ENCODE measurements at regions of chr19 and their contacts with region 1.

Region 1: GRCh38 chr19:39328046-39328705 is 7.5 kb upstream of the LRFN1 start:
- ATAC-seq: peak; percentile 70 to 85 (median 80)
- H3K4me3 ChIP-seq: no peak overlapping the region
- H3K27ac ChIP-seq: no peak overlapping the region
- H3K4me1 ChIP-seq: peaks cover 11 to 13% of the 10 kb centered on the region in 2 donors

Region 2: DNA sequence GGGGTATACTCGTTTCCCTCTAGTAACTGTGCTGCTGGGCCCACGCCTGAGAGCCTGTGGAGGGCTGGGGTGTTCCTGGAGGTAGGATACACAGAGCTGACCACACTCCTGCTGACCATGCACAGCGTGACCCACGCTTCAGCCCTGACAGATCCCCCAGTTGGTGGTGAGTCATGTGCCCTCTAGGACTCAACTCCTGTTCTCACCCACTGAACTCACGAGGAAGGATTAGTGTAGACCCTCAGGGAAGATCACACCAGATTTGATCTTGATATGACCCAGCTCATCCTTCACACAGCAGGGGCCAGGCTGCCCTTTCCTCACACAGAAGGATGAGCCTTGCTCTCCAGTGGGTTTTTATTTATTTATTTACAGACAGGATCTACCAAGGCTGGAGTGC is 257.3 kb before region 1 on chr19:
- in situ Hi-C with region 1: no loop called
- ATAC-seq: no peak
- H3K4me3 ChIP-seq: no peak overlapping the region
- H3K27ac ChIP-seq: no peak overlapping the region
- H3K4me1 ChIP-seq: no peaks in the 10 kb centered on the region

Region 3: GRCh38 chr19:39125554-39126311 is 202.4 kb before region 1 on chr19 and contains the start of gene PAK4:
- in situ Hi-C with region 1: loop called in 5 of 9 experiments (anchors 10 to 25 kb)
- ATAC-seq: peak; percentile 82 to 100 (median 96)
- H3K4me3 ChIP-seq: peak within 1 kb of the TSS; percentile 78 to 99 (median 81)
- H3K27ac ChIP-seq: peak within 1 kb of the TSS; percentile 89 to 92
- H3K4me1 ChIP-seq: peaks cover 17 to 22% of the 10 kb centered on the region in 2 donors
- total RNA-seq, gene PAK4: 6.5 to 42.8 (median 11.9) TPM

Region 4: DNA sequence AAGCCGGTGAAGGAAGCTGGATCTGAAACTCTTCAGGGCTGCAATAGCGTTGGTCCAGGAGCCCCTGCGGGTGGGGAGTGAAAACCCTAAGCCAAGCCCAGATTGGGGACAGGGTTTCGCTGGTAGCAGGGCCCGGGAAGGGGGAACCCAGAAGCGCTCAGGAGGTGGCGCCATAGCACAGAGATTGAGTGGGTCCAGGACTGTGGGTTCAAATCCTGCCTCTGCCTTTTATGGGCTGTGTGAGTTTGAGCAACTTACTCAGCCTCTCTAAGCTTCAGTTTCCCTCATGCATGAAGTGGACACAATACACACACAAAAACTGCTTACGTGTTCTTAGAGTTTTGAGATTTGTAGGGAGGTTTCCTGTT is 115.8 kb before region 1 on chr19:
- in situ Hi-C with region 1: loop called in 1 of 9 experiments (anchors 10 kb)
- ATAC-seq: peak in 3 of 8 experiments; percentile 74 to 94 (median 83)
- H3K4me3 ChIP-seq: no peak overlapping the region
- H3K27ac ChIP-seq: no peak overlapping the region
- H3K4me1 ChIP-seq: no peaks in the 10 kb centered on the region

Region 5: GRCh38 chr19:39246951-39247669 is 81.1 kb before region 1 on chr19:
- in situ Hi-C with region 1: no loop called
- ATAC-seq: peak; percentile 19 to 83 (median 72)
- H3K4me3 ChIP-seq: peak overlapping the region in 2 of 5 donors; percentile 6 to 16
- H3K27ac ChIP-seq: no peak overlapping the region
- H3K4me1 ChIP-seq: no peaks in the 10 kb centered on the region

Measured in motor neuron (in vitro differentiated cells).